ENCODE measurements at regions of chr6 and their contacts with region 1.

Region 1: GRCh38 chr6:17505062-17505476 is 95.0 kb upstream of the FAM8A1 start:
- DNase-seq: no peak
- CTCF ChIP-seq: no peak

Region 2: GRCh38 chr6:17494919-17495318 is 10.2 kb before region 1 on chr6:
- CTCF ChIA-PET with region 1: interaction called, 13 read pairs
- POLR2A ChIA-PET with region 1: no interaction called
- DNase-seq: no peak
- CTCF ChIP-seq: no peak